ENCODE measurements at regions of chr7 and their contacts with region 1.

Region 1: GRCh38 chr7:140003913-140004382 is 58.8 kb downstream of the PARP12 start:
- DNase-seq: no peak
- ATAC-seq: no peak
- H3K4me3 ChIP-seq: no peak overlapping the region
- H3K27ac ChIP-seq: no peak overlapping the region
- H3K4me1 ChIP-seq: no peaks in the 10 kb centered on the region
- H3K27me3 ChIP-seq: peaks cover 0 to 3% (median 0%) of the 10 kb centered on the region in 3 donors
- CTCF ChIP-seq: peak; percentile 33

Region 2: GRCh38 chr7:139502226-139502625 is 501.7 kb before region 1 on chr7:
- intact Hi-C with region 1: loop called (anchors 2 to 5 kb)
- DNase-seq: no peak
- ATAC-seq: no peak
- H3K4me3 ChIP-seq: no peak overlapping the region
- H3K27ac ChIP-seq: no peak overlapping the region
- H3K4me1 ChIP-seq: no peaks in the 10 kb centered on the region
- H3K27me3 ChIP-seq: no peaks in the 10 kb centered on the region
- CTCF ChIP-seq: no peak

Region 3: DNA sequence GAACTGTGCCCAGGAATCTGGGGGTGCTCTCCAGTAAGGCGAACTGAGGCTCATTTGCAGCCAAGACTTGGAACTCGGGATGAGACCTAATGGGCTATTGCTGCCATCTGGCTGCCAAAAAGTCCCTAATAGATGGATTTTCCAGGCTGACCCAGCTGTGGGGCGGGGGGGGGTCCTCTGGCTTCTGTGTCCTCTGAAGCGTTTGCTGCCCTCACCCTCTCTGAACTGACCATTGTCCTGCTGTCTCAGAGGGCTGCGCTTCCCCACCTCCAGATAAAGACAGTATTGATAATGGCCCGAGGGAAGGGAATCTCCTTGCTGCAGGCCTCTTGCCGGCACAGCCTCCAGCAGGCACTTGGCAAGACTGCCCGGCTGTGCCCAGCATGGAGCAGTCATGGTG is 433.8 kb before region 1 on chr7:
- intact Hi-C with region 1: no loop called
- DNase-seq: no peak
- ATAC-seq: no peak
- H3K4me3 ChIP-seq: no peak overlapping the region
- H3K27ac ChIP-seq: no peak overlapping the region
- H3K4me1 ChIP-seq: peaks cover 23% of the 10 kb centered on the region
- H3K27me3 ChIP-seq: no peaks in the 10 kb centered on the region
- CTCF ChIP-seq: no peak

Region 4: DNA sequence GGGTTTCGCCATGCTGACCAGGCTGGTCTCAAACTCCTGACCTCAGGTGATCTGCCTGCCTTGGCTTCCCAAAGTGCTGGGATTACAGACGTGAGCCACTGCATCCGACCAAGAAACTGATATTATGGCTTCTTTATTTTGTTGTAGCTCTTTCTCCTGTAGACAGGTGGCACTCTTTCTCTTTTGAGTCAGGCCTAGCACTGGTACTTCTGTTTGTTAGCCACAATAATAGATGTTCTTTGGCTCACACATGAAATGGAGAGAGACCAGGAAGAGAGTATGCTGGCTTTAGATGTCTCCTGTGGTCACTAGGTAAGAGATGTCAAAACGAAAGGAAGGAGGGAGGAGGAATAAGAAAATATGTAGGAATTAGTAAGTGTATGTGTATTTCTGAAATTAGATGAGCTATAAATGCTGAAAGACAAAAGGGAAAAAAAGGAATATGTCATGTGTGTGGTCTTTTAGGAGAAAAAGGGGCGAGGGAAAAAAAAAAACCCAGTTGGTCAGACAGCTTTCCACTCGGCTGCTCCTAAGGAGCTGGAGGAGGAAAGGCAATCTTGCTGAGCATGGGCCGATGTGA is 401.7 kb before region 1 on chr7:
- intact Hi-C with region 1: loop called in 1 of 2 experiments (anchors 2 kb)
- DNase-seq: no peak
- ATAC-seq: peak in 3 of 4 donors; percentile 56 to 88 (median 76)
- H3K4me3 ChIP-seq: no peak overlapping the region
- H3K27ac ChIP-seq: no peak overlapping the region
- H3K4me1 ChIP-seq: no peaks in the 10 kb centered on the region
- H3K27me3 ChIP-seq: no peaks in the 10 kb centered on the region
- CTCF ChIP-seq: peak; percentile 38

Region 5: GRCh38 chr7:139620676-139621344 is 383.1 kb before region 1 on chr7:
- intact Hi-C with region 1: loop called (anchors 5 kb)
- DNase-seq: peak; percentile 34 to 73
- ATAC-seq: peak; percentile 78 to 87 (median 82)
- H3K4me3 ChIP-seq: no peak overlapping the region
- H3K27ac ChIP-seq: no peak overlapping the region
- H3K4me1 ChIP-seq: no peaks in the 10 kb centered on the region
- H3K27me3 ChIP-seq: no peaks in the 10 kb centered on the region
- CTCF ChIP-seq: peak; percentile 70

Region 6: GRCh38 chr7:139645572-139646523 is 358.1 kb before region 1 on chr7:
- intact Hi-C with region 1: loop called (anchors 1 to 2 kb)
- DNase-seq: peak; percentile 82 to 89
- ATAC-seq: peak; percentile 79 to 87 (median 83)
- H3K4me3 ChIP-seq: no peak overlapping the region
- H3K27ac ChIP-seq: no peak overlapping the region
- H3K4me1 ChIP-seq: peaks cover 25% of the 10 kb centered on the region
- H3K27me3 ChIP-seq: no peaks in the 10 kb centered on the region
- CTCF ChIP-seq: peak; percentile 92

Region 7: GRCh38 chr7:139680676-139681462 is 323.1 kb before region 1 on chr7:
- intact Hi-C with region 1: no loop called
- DNase-seq: peak; percentile 70 to 81
- ATAC-seq: peak; percentile 80 to 87 (median 86)
- H3K4me3 ChIP-seq: no peak overlapping the region
- H3K27ac ChIP-seq: peak overlapping the region; percentile 79
- H3K4me1 ChIP-seq: peaks cover 54% of the 10 kb centered on the region
- H3K27me3 ChIP-seq: no peaks in the 10 kb centered on the region
- CTCF ChIP-seq: no peak

Region 8: GRCh38 chr7:139777948-139778841 is 225.8 kb before region 1 on chr7 and contains the start of gene HIPK2:
- intact Hi-C with region 1: loop called (anchors 5 to 10 kb)
- DNase-seq: peak; percentile 87 to 92
- ATAC-seq: peak; percentile 76 to 81 (median 78)
- H3K4me3 ChIP-seq: peak within 1 kb of the TSS; percentile 95
- H3K27ac ChIP-seq: peak within 1 kb of the TSS; percentile 93
- H3K4me1 ChIP-seq: peaks cover 33% of the 10 kb centered on the region
- H3K27me3 ChIP-seq: no peaks in the 10 kb centered on the region
- CTCF ChIP-seq: no peak
- total RNA-seq, gene HIPK2: 74.7 to 166 (median 99.6) TPM